ENCODE measurements at regions of chr7 and their contacts with region 1.

Region 1: GRCh38 chr7:4823441-4824119 is 38.2 kb downstream of the PAPOLB start:
- DNase-seq: peak in 1 of 2 experiments; percentile 22
- H3K4me3 ChIP-seq: no peak overlapping the region
- H3K27ac ChIP-seq: no peak overlapping the region
- H3K4me1 ChIP-seq: no peaks in the 10 kb centered on the region
- H3K27me3 ChIP-seq: peaks cover 92% of the 10 kb centered on the region
- CTCF ChIP-seq: no peak

Region 2: GRCh38 chr7:4621401-4622145 is 202.0 kb before region 1 on chr7:
- CTCF ChIA-PET with region 1: no interaction called
- POLR2A ChIA-PET with region 1: interaction called, 14 read pairs
- intact Hi-C with region 1: no loop called
- DNase-seq: no peak
- H3K4me3 ChIP-seq: no peak overlapping the region
- H3K27ac ChIP-seq: no peak overlapping the region
- H3K4me1 ChIP-seq: no peaks in the 10 kb centered on the region
- H3K27me3 ChIP-seq: peaks cover 31% of the 10 kb centered on the region
- CTCF ChIP-seq: no peak

Region 3: GRCh38 chr7:4883374-4884144 is 60.0 kb after region 1 on chr7 and contains the start of gene RADIL:
- CTCF ChIA-PET with region 1: no interaction called
- POLR2A ChIA-PET with region 1: no interaction called
- intact Hi-C with region 1: no loop called
- DNase-seq: peak in 1 of 2 experiments; percentile 75
- H3K4me3 ChIP-seq: no peak within 1 kb of the TSS
- H3K27ac ChIP-seq: no peak within 1 kb of the TSS
- H3K4me1 ChIP-seq: no peaks in the 10 kb centered on the region
- H3K27me3 ChIP-seq: peaks cover 53% of the 10 kb centered on the region
- CTCF ChIP-seq: peak; percentile 41; the same call in 1 of the 2 replicates
- total RNA-seq, gene RADIL: 0.35 and 0.73 TPM in 2 replicates

Measured in PC-9 (cell line).